ENCODE measurements at regions of chr3 and their contacts with region 1.

Region 1: GRCh38 chr3:177131927-177132636 is 65.2 kb downstream of the TBL1XR1 start:
- DNase-seq: no peak
- ATAC-seq: no peak
- H3K4me3 ChIP-seq: no peak overlapping the region
- H3K4me3 Mint-ChIP-seq: peak overlapping the region in 3 of 10 donors; percentile 0 to 44 (median 43)
- H3K27ac ChIP-seq: no peak overlapping the region
- H3K27ac Mint-ChIP-seq: peak overlapping the region in 3 of 9 donors; percentile 9 to 45 (median 38)
- H3K4me1 ChIP-seq: peaks cover 7 to 10% of the 10 kb centered on the region in 2 donors
- H3K4me1 Mint-ChIP-seq: peaks cover 49 to 87% (median 75%) of the 10 kb centered on the region in 7 donors
- H3K27me3 ChIP-seq: no peaks in the 10 kb centered on the region
- H3K27me3 Mint-ChIP-seq: no peaks in the 10 kb centered on the region

Region 2: DNA sequence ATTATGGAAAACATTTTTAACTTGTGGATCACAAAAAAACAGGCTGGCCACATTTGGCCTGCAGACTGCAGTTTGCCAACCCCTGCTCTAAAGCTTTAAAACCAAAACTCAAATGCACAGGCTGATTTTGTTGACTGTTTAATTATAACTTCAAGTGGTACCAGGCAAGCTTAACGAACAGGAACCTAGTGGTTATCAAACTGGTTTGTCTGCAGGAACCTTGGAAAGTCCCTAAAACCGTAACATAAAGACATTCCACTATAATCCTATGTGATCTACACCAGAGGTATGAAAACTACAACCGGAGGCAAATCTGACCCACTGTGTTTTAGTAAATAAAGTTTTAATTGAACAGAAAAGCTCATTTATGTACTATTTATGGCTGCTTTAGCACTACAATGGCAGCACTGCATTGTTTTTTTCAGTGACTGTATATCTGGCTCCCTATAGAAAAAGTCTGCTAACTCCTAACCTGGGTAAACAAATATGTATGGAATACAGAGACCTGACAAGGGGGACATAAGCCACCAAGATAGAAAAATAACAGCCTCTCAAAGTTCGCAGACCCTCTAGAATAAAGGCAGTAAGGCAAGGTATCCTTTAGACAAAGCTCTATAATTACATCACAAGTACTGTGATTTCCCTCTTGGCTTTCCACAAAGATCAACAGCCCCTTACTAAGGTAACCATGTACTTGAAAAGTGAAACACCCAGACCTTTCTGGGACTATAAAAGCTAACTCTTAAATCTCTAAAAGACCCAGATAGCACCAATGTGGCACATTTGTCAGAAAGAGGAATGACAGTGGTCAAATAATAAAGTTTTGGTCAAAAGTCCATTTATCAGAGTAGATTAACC is 13.1 kb after region 1 on chr3:
- CTCF ChIA-PET with region 1: no interaction called
- POLR2A ChIA-PET with region 1: no interaction called
- intact Hi-C with region 1: loop called in 1 of 2 experiments (anchors 2 kb)
- DNase-seq: peak in 7 of 9 donors; percentile 25 to 67 (median 41)
- ATAC-seq: peak; percentile 91
- H3K4me3 ChIP-seq: peak overlapping the region; percentile 30
- H3K4me3 Mint-ChIP-seq: peak overlapping the region in 9 of 10 donors; percentile 51 to 74 (median 68)
- H3K27ac ChIP-seq: peak overlapping the region; percentile 47
- H3K27ac Mint-ChIP-seq: peak overlapping the region; percentile 64 to 94 (median 84)
- H3K4me1 ChIP-seq: peaks cover 39 to 40% of the 10 kb centered on the region in 2 donors
- H3K4me1 Mint-ChIP-seq: peaks cover 41 to 89% (median 71%) of the 10 kb centered on the region in 7 donors
- H3K27me3 ChIP-seq: no peaks in the 10 kb centered on the region
- H3K27me3 Mint-ChIP-seq: no peaks in the 10 kb centered on the region

Measured in naive thymus-derived CD4-positive, alpha-beta T cell (primary cell).